Common myeloid progenitor, CD34-positive (primary cell): ENCODE measurements at regions of chr16 and their contacts with region 1.

Region 1: GRCh38 chr16:25051406-25052150 is 36.4 kb upstream of the ARHGAP17 start:
- DNase-seq: no peak
- H3K4me3 ChIP-seq: peak overlapping the region in 1 of 7 experiments; percentile 28
- H3K27ac ChIP-seq: no peak overlapping the region
- H3K4me1 ChIP-seq: peaks cover 7 to 34% (median 18%) of the 10 kb centered on the region in 4 experiments
- H3K27me3 ChIP-seq: no peaks in the 10 kb centered on the region

Region 2: GRCh38 chr16:25111403-25112166 is 60.0 kb after region 1 on chr16 and contains the start of gene LCMT1:
- CTCF ChIA-PET with region 1: interaction called, 52 read pairs
- POLR2A ChIA-PET with region 1: interaction called, 7 read pairs
- DNase-seq: peak; percentile 98 to 99 (median 99)
- H3K4me3 ChIP-seq: peak within 1 kb of the TSS; percentile 83 to 97 (median 88)
- H3K27ac ChIP-seq: peak within 1 kb of the TSS; percentile 25 to 75
- H3K4me1 ChIP-seq: peaks cover 14 to 36% (median 25%) of the 10 kb centered on the region in 4 experiments
- H3K27me3 ChIP-seq: no peaks in the 10 kb centered on the region